ENCODE measurements at regions of chr11 and their contacts with region 1.

Region 1: GRCh38 chr11:84089072-84090057 is 803.2 kb upstream of the CCDC90B start:
- H3K4me3 Mint-ChIP-seq: no peak overlapping the region
- H3K27ac Mint-ChIP-seq: no peak overlapping the region
- H3K4me1 Mint-ChIP-seq: no peaks in the 10 kb centered on the region
- H3K27me3 Mint-ChIP-seq: no peaks in the 10 kb centered on the region

Region 2: DNA sequence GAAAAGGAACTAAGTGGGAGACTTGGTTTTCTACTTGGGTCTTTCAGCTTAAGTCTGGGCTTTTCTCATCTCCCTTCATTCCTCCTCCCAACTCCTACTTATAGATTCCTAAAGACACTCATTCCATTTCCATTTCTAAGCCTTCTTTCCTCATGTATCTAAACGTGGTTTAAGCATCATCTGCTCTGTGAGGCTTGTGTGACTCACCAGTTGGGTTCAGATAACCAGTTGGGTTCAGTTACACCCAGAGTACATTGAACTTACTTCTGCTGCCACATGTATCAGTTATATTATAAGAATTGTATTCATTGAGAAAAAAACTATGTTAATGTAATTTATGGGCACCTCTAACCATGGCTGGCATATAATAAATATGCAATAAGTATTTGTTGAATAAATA is 28.0 kb after region 1 on chr11:
- intact Hi-C with region 1: loop called (anchors 5 kb)
- H3K4me3 Mint-ChIP-seq: no peak overlapping the region
- H3K27ac Mint-ChIP-seq: no peak overlapping the region
- H3K4me1 Mint-ChIP-seq: no peaks in the 10 kb centered on the region
- H3K27me3 Mint-ChIP-seq: no peaks in the 10 kb centered on the region

Measured in dendritic cell treated with granulocyte-macrophage colony-stimulating factor and Interleukin-4, amounts not matched to agents 40 ng/mL and 50 ng/mL, for 4 days (primary cell).